Right cardiac atrium (tissue), 5 donors: ENCODE measurements at regions of chr13 and their contacts with region 1.

Region 1: GRCh38 chr13:106536244-106537034 is 977 bp upstream of the EFNB2 start:
- DNase-seq: peak; percentile 91 to 97 (median 96)
- ATAC-seq: peak; percentile 77 to 80
- H3K4me3 ChIP-seq: peak overlapping the region; percentile 88
- H3K27ac ChIP-seq: peak overlapping the region; percentile 57
- H3K4me1 ChIP-seq: peaks cover 2% of the 10 kb centered on the region
- H3K27me3 ChIP-seq: no peaks in the 10 kb centered on the region

Region 2: DNA sequence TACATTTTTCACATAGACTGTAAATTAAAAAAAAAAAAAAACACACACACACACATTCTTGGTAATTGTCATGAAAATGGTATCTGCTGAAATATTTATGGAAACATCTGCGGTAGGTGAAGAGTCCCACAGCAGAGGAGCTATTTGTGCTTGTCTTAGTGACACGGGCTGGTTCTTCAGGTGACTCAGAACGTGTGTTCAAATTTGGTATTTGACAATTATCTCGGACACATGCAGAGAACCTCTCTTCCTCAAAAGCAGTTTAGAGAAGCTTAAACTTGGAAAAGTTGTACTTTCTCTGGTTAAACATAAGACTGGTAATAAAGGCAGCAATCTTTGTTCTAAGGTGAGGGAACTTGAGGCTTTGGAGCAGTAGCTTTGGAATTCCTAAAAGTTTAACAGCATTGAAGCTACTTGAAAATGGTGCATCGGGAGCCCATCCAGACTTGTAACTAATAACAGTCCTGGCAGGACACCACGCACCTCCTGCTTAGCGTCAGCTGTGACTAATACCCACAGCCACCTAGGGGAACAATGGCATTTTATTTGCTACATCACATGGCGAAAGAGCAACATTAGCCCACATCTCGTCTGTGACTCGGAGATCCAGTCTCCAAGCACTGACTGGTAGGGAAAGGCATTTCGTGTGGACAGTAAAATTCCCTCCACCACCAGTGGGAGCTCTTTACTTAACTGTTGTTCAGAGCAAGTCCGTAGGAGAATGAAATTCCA is 1965.1 kb before region 1 on chr13:
- intact Hi-C with region 1: loop called in 1 of 4 experiments (anchors 10 kb)
- DNase-seq: peak in 2 of 3 donors; percentile 38 to 49
- ATAC-seq: peak; percentile 76 to 93
- H3K4me3 ChIP-seq: no peak overlapping the region
- H3K27ac ChIP-seq: no peak overlapping the region
- H3K4me1 ChIP-seq: no peaks in the 10 kb centered on the region
- H3K27me3 ChIP-seq: no peaks in the 10 kb centered on the region

Region 3: DNA sequence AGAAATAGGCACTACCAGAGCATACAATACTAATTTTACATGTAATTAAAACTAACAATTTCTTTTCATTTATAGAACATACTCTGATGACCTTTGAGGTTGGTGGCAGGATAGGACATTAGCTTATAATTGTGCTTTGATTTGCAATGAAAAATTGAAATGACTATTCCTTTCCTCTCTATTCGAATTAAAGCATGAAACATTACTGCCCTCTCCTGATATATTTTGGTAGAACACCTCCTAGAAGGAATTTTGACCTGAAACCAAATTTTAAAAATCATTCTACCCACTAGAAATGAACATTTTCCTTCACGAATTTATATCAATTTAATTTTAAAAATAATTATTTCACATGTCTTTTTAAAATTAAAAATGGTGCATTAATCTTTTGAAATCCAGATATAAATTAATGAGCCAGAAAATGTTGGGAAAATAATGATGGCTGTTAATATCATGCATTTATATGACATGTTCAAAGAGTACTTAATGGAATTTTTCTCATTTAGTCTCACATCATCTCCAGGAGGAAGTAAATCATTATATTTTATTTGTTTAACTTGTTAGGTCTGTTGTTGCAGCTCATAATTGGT is 587.8 kb after region 1 on chr13:
- intact Hi-C with region 1: loop called in 1 of 4 experiments (anchors 10 kb)
- DNase-seq: no peak
- ATAC-seq: no peak
- H3K4me3 ChIP-seq: no peak overlapping the region
- H3K27ac ChIP-seq: no peak overlapping the region
- H3K4me1 ChIP-seq: peaks cover 1% of the 10 kb centered on the region
- H3K27me3 ChIP-seq: no peaks in the 10 kb centered on the region